Pancreas (tissue), 10 donors: ENCODE measurements at regions of chrX and their contacts with region 1.

Region 1: GRCh38 chrX:83630662-83631061 is 122.6 kb downstream of the POU3F4 start:
- DNase-seq: peak in 2 of 6 donors; percentile 28 to 43
- ATAC-seq: no peak
- H3K4me3 ChIP-seq: no peak overlapping the region
- H3K27ac ChIP-seq: no peak overlapping the region
- H3K4me1 ChIP-seq: no peaks in the 10 kb centered on the region
- H3K27me3 ChIP-seq: peaks cover 0 to 4% (median 0%) of the 10 kb centered on the region in 4 donors
- CTCF ChIP-seq: no peak

Region 2: GRCh38 chrX:83469551-83469950 is 161.1 kb before region 1 on chrX:
- intact Hi-C with region 1: loop called in 1 of 3 experiments (anchors 5 kb)
- DNase-seq: peak in 1 of 6 donors; percentile 22
- ATAC-seq: peak in 2 of 4 donors; percentile 56
- H3K4me3 ChIP-seq: no peak overlapping the region
- H3K27ac ChIP-seq: no peak overlapping the region
- H3K4me1 ChIP-seq: no peaks in the 10 kb centered on the region
- H3K27me3 ChIP-seq: peaks cover 0 to 35% (median 5%) of the 10 kb centered on the region in 4 donors
- CTCF ChIP-seq: peak; percentile 17 to 49 (median 31)